G401 (cell line): ENCODE measurements at regions of chr1 and their contacts with region 1.

Region 1: GRCh38 chr1:28796352-28797211 is 15.4 kb upstream of the OPRD1 start:
- DNase-seq: no peak

Region 2: DNA sequence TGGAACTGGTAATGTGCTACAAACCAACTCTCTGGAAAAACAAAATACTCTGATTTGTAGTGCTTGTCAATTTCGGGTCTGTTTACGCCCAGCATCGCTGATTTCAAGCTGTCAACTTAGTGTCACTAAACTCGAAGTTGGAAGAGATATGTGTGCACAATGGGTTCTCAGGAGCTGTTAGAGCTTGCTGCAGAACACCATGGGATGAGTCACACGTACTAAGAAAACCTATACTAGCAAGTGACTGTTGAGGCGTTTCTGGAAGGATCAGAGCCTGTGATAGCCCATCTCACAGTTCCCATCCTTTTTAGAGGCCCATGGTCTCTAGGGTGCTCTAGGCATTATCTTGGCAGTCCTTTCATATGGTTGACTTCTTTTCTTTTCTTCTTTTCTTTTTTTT is 113.7 kb before region 1 on chr1:
- in situ Hi-C with region 1: no loop called
- DNase-seq: no peak

Region 3: DNA sequence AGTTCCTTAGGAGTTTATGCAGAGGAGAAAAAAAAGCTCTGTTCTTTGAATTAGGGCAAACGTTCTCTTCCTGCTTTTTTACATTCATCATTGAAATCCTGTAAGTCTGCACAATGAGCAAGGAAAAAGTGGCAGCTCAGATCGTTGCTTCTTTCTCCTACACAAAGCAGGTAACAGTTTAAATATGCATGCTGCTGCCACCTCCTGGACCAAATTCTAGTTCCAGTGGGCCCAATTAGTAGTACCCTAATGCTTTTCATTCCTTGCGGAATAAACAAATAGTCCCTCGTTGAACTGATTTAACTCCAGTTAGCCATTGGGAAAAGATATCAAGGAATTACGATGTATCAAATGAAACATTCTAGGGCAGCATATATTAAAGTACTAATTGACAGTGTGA is 39.7 kb before region 1 on chr1:
- in situ Hi-C with region 1: no loop called
- DNase-seq: peak; percentile 73

Region 4: GRCh38 chr1:28860332-28861073 is 63.9 kb after region 1 on chr1:
- in situ Hi-C with region 1: loop called (anchors 5 kb)
- DNase-seq: peak; percentile 86